ENCODE measurements at regions of chr19 and their contacts with region 1.

Region 1: GRCh38 chr19:6737284-6738046 is at the start of gene GPR108:
- DNase-seq: peak; percentile 100
- H3K4me3 ChIP-seq: peak within 1 kb of the TSS; percentile 83 to 95 (median 88)
- H3K27ac ChIP-seq: peak within 1 kb of the TSS; percentile 95 to 99 (median 97)
- H3K4me1 ChIP-seq: peaks cover 38 to 68% (median 50%) of the 10 kb centered on the region in 4 donors
- H3K27me3 ChIP-seq: no peaks in the 10 kb centered on the region
- CTCF ChIP-seq: no peak
- EP300 ChIP-seq: no peak
- POLR2A ChIP-seq: no peak
- total RNA-seq, gene GPR108: 38.2 to 61.7 (median 48.2) TPM

Region 2: DNA sequence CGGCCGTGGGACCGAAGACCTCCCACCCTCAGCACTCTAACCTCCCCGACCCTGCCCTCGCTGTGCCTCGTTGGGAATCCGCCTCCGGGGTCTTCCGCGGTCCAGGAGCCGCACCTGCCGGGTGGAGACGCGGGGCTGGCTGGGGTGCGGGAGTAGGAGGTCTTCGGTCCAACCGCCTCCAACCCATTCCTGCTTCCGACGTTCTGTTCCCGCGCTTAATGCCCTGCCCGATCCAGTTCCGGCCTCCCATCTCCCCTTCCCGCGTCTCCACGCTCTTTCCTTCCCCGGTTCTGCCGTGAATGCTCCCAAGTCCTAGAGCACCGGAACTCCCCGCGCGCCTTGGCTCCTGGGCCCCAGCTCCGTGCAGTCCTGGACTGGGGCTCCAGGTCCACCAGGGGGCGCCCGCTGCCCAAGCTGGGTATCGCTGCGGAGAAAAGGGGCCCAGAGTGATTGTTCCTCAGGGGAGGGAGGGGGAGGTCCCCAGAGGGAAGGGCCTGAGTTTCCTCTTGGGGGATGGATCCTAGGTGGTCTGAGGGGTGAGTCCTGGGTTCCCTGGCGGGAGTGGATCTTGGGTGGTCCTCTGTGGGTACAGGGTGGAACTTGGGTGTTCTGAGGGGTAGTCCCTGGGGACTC is 220.7 kb before region 1 on chr19:
- intact Hi-C with region 1: loop called (anchors 5 kb)
- DNase-seq: peak; percentile 93
- H3K4me3 ChIP-seq: peak overlapping the region; percentile 67 to 73 (median 69)
- H3K27ac ChIP-seq: peak overlapping the region; percentile 64 to 79 (median 76)
- H3K4me1 ChIP-seq: peaks cover 7 to 24% (median 16%) of the 10 kb centered on the region in 4 donors
- H3K27me3 ChIP-seq: peaks cover 0 to 11% (median 0%) of the 10 kb centered on the region in 4 donors
- CTCF ChIP-seq: peak; percentile 93 to 100 (median 96)
- EP300 ChIP-seq: no peak
- POLR2A ChIP-seq: no peak

Region 3: GRCh38 chr19:6632002-6632621 is 105.4 kb before region 1 on chr19:
- intact Hi-C with region 1: loop called (anchors 10 kb)
- DNase-seq: no peak
- H3K4me3 ChIP-seq: no peak overlapping the region
- H3K27ac ChIP-seq: no peak overlapping the region
- H3K4me1 ChIP-seq: peaks cover 0 to 6% (median 1%) of the 10 kb centered on the region in 4 donors
- H3K27me3 ChIP-seq: peaks cover 0 to 24% (median 0%) of the 10 kb centered on the region in 4 donors
- CTCF ChIP-seq: peak; percentile 75 to 88 (median 86)
- EP300 ChIP-seq: no peak
- POLR2A ChIP-seq: no peak

Region 4: GRCh38 chr19:6773323-6773931 is 36.0 kb after region 1 on chr19:
- intact Hi-C with region 1: no loop called
- DNase-seq: no peak
- H3K4me3 ChIP-seq: peak overlapping the region; percentile 37 to 56 (median 44)
- H3K27ac ChIP-seq: peak overlapping the region in 2 of 4 donors; percentile 10 to 48
- H3K4me1 ChIP-seq: no peaks in the 10 kb centered on the region
- H3K27me3 ChIP-seq: peaks cover 0 to 36% (median under 1%) of the 10 kb centered on the region in 4 donors
- CTCF ChIP-seq: no peak
- EP300 ChIP-seq: no peak
- POLR2A ChIP-seq: no peak

Region 5: GRCh38 chr19:6862673-6863078 is 125.2 kb after region 1 on chr19:
- intact Hi-C with region 1: loop called (anchors 5 kb)
- DNase-seq: peak; percentile 93
- H3K4me3 ChIP-seq: peak overlapping the region; percentile 31 to 49 (median 41)
- H3K27ac ChIP-seq: no peak overlapping the region
- H3K4me1 ChIP-seq: peaks cover 7 to 11% (median 9%) of the 10 kb centered on the region in 4 donors
- H3K27me3 ChIP-seq: peaks cover 0 to 31% (median 7%) of the 10 kb centered on the region in 4 donors
- CTCF ChIP-seq: peak; percentile 80 to 91 (median 86)
- EP300 ChIP-seq: no peak
- POLR2A ChIP-seq: no peak

Region 6: GRCh38 chr19:7069042-7069903 is 331.8 kb after region 1 on chr19 and contains the start of gene ZNF557:
- intact Hi-C with region 1: loop called (anchors 10 kb)
- DNase-seq: peak; percentile 99
- H3K4me3 ChIP-seq: peak within 1 kb of the TSS; percentile 81 to 96 (median 90)
- H3K27ac ChIP-seq: peak within 1 kb of the TSS; percentile 80 to 85 (median 82)
- H3K4me1 ChIP-seq: peaks cover 11 to 22% (median 14%) of the 10 kb centered on the region in 4 donors
- H3K27me3 ChIP-seq: no peaks in the 10 kb centered on the region
- CTCF ChIP-seq: no peak
- EP300 ChIP-seq: no peak
- POLR2A ChIP-seq: no peak
- total RNA-seq, gene ZNF557: 5.5 to 9.0 (median 8.3) TPM